ENCODE measurements at regions of chr17 and their contacts with region 1.

Region 1: DNA sequence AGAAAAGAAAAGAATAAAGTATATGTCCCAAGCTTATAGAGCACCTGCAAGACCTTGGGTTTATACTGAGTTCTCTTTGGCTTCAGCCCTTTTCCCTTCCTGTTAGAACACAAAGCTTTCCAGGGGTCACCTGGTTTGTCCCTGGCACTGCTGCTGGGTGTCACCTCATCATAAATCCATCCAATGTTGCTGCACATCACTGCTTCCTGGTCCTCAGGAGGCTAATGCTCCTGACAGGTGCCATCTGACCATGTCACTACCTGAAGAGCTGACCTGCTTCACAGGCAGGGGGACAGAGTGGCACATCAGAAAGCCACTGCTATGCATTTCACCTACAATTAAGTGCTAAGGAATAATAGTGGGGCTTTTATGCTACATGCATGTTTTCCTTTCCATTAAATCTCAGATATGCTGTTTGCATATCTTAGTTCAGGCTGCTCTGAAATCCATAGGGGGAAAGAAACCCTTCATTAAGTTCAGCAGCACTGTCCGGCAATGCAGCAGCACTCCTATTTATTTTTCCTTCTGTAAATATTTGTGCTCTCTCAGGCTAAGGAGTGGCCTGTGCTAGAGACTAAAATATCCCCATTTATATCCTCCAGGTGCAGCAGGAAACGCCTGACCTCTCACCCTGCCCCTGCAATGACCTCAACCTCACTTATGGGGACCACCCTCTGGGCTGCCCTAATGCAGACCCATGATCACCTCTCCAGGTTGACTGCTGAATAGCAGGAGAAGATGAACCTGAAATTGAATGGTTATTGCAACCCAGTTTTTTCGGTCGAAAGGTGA is 164.8 kb upstream of the ELAC2 start:
- DNase-seq: no peak
- ATAC-seq: no peak
- H3K4me3 ChIP-seq: no peak overlapping the region
- H3K4me3 Mint-ChIP-seq: no peak overlapping the region
- H3K27ac ChIP-seq: no peak overlapping the region
- H3K27ac Mint-ChIP-seq: no peak overlapping the region
- H3K4me1 ChIP-seq: no peaks in the 10 kb centered on the region
- H3K4me1 Mint-ChIP-seq: no peaks in the 10 kb centered on the region
- H3K27me3 ChIP-seq: no peaks in the 10 kb centered on the region
- H3K27me3 Mint-ChIP-seq: no peaks in the 10 kb centered on the region
- CTCF ChIP-seq: no peak

Region 2: DNA sequence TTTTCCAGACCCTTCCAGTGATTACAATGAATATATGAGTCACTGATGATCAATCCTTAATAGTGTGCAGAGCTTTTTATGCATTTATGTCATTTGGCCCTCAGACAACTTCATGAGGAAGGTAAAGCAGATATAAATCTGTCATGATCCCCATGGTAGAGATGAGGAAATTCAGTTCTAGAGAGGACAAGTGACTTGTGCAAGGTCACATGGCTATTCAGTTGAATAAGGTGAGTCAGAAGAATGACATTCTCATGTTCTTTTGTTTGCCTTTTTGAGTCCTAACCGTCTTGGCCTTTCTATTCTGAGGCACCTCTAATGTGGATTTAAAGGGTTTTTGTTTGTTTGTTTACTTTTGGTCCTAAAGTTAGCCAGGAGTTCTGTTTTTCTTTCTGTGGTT is 48.6 kb before region 1 on chr17:
- CTCF ChIA-PET with region 1: no interaction called
- POLR2A ChIA-PET with region 1: no interaction called
- intact Hi-C with region 1: loop called in 1 of 2 experiments (anchors 5 kb)
- DNase-seq: no peak
- ATAC-seq: no peak
- H3K4me3 ChIP-seq: no peak overlapping the region
- H3K4me3 Mint-ChIP-seq: no peak overlapping the region
- H3K27ac ChIP-seq: no peak overlapping the region
- H3K27ac Mint-ChIP-seq: no peak overlapping the region
- H3K4me1 ChIP-seq: no peaks in the 10 kb centered on the region
- H3K4me1 Mint-ChIP-seq: no peaks in the 10 kb centered on the region
- H3K27me3 ChIP-seq: no peaks in the 10 kb centered on the region
- H3K27me3 Mint-ChIP-seq: no peaks in the 10 kb centered on the region
- CTCF ChIP-seq: no peak